ENCODE measurements at regions of chr19 and their contacts with region 1.

Region 1: GRCh38 chr19:2236314-2237050 is at the starts of genes PLEKHJ1 and SF3A2:
- DNase-seq: peak; percentile 96 to 97
- ATAC-seq: peak; percentile 71
- total RNA-seq, gene PLEKHJ1: 198 to 213 TPM
- total RNA-seq, gene SF3A2: 60.3 to 62.7 TPM

Region 2: GRCh38 chr19:2151339-2152229 is 84.9 kb before region 1 on chr19 and contains the start of gene AP3D1:
- intact Hi-C with region 1: loop called in 1 of 2 experiments (anchors 10 kb)
- DNase-seq: peak; percentile 100
- ATAC-seq: peak; percentile 85
- total RNA-seq, gene AP3D1: 99.4 to 123 TPM

Region 3: GRCh38 chr19:2328401-2329148 is 92.1 kb after region 1 on chr19 and contains the starts of genes LSM7 and SPPL2B:
- intact Hi-C with region 1: loop called in 1 of 2 experiments (anchors 10 kb)
- DNase-seq: peak; percentile 85 to 91
- ATAC-seq: peak; percentile 57
- total RNA-seq, gene LSM7: 67.1 to 101 TPM
- total RNA-seq, gene SPPL2B: 142 to 173 TPM

Measured in left colon (tissue), 2 donors.